Activated CD8-positive, alpha-beta T cell treated with anti-CD3 and anti-CD28 coated beads for 36 hours (primary cell): ENCODE measurements at regions of chr17 and their contacts with region 1.

Region 1: DNA sequence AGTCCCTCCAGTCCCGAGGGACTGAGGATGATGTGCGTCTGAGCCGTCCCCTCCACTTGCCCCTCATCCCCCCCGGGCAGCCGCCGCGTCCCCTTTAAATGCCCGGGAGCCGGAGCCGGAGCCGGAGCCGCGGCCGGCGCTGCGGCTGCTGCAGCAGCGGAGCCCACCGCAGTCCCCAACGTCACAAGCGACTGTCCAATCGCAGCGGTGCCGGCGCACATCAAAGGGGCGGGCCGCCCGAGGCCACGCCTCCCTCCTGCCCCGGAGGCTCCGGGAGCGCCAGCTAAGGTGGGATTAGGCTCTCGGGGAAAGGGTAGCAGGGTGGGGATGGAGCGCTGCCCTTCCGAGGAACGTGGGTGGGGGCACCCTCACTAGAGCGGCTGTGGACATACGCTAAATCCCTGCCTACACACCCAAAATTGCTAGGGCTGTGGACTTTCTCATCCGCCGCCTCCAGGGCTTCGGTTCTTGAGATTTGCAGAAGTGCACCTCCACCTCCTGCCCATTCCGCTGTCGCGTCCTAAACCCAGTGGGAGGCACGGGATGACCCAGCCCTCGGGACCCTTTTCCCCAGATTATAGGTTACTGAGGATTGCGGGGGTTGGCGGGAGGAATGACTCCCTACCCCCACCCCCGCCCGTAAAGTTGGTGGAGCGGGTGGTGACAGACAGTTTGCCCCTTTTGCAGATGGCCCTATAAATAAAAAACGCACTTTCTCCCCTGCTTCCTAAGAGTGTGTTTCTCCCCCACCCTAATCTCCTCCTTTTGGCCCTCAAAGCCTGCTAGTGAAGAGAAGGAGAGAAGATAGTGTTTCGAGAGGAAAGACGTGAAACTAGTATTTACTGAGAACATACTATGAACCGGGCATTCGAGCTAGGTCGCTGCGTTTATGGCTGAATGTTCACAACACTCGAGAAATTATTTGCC is at the start of gene PHOSPHO1:
- DNase-seq: peak; percentile 90
- ATAC-seq: peak; percentile 88
- H3K4me3 Mint-ChIP-seq: peak within 1 kb of the TSS; percentile 66
- H3K27ac Mint-ChIP-seq: no peak within 1 kb of the TSS
- H3K4me1 Mint-ChIP-seq: peaks cover 3% of the 10 kb centered on the region
- H3K27me3 Mint-ChIP-seq: peaks cover 19% of the 10 kb centered on the region
- CTCF ChIP-seq: no peak
- total RNA-seq, gene PHOSPHO1: not detected

Region 2: DNA sequence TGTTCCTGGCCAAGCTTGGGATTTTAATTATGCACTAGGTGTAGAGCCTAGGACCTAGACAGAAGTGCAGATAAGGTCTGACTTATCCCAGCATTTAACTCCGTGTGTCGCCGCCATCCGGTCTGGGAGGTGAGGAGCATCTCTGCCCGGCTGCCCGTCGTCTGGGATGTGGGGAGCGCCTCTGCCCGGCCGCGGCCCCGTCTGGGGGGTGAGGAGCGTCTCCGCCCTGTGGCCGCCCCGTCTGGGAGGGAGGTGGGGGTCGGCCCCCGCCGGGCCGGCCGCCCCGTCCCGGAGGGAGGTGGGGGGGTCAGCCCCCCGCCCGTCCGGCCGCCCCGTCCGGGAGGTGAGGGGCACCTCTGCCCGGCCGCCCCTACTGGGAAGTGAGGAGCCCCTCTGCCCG is 105.5 kb before region 1 on chr17:
- CTCF ChIA-PET with region 1: no interaction called
- POLR2A ChIA-PET with region 1: no interaction called
- intact Hi-C with region 1: no loop called
- DNase-seq: no peak
- ATAC-seq: no peak
- H3K4me3 Mint-ChIP-seq: no peak overlapping the region
- H3K27ac Mint-ChIP-seq: no peak overlapping the region
- H3K4me1 Mint-ChIP-seq: no peaks in the 10 kb centered on the region
- H3K27me3 Mint-ChIP-seq: peaks cover 21% of the 10 kb centered on the region
- CTCF ChIP-seq: no peak

Region 3: GRCh38 chr17:49180303-49180702 is 50.6 kb before region 1 on chr17:
- CTCF ChIA-PET with region 1: interaction called, 210 read pairs
- POLR2A ChIA-PET with region 1: interaction called, 20 read pairs
- intact Hi-C with region 1: loop called (anchors 2 kb)
- DNase-seq: peak; percentile 82
- ATAC-seq: peak; percentile 37
- H3K4me3 Mint-ChIP-seq: no peak overlapping the region
- H3K27ac Mint-ChIP-seq: no peak overlapping the region
- H3K4me1 Mint-ChIP-seq: peaks cover 4% of the 10 kb centered on the region
- H3K27me3 Mint-ChIP-seq: no peaks in the 10 kb centered on the region
- CTCF ChIP-seq: peak; percentile 99

Region 4: DNA sequence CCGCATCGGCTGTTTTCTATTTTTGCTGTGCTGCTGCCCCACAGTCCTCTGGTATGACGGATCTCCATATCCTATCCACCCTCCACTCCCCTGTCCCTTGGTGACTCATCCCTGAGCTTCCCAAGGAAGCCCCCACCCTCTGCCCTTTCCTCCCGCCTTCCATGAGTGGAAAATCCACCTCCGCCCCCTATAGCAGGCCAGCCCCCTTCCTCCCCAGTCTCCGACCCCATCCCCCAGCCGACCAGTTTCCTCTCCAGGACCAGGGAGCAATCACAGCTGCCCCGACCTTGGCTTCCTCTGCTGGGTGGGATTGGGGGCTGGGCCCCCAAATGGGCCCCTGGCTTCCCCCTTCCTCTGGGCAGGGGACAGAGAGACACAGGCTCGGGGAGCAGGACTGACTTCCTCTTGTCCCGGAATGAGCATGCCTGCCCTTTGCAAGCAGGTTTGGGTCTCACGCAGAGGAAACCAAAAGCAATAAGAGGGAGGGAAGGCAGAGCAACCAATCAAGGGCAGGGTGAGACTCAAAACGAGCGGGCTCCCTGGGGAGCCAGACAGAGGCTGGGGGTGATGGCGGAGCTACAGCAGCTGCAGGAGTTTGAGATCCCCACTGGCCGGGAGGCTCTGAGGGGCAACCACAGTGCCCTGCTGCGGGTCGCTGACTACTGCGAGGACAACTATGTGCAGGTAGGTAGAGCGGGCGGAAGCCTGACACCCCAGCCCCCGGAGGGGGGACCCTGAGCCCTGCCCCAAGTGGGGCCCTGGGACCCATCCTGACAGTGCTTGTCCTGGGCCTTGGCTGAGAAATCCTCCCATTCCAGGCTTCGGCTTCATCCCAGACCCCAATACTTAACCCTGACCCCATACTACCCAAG is 20.5 kb before region 1 on chr17 and contains the starts of genes ABI3 and GNGT2:
- CTCF ChIA-PET with region 1: interaction called, 15 read pairs
- POLR2A ChIA-PET with region 1: interaction called, 26 read pairs
- intact Hi-C with region 1: no loop called
- DNase-seq: peak; percentile 85
- ATAC-seq: peak; percentile 88
- H3K4me3 Mint-ChIP-seq: peak within 1 kb of the TSS; percentile 79
- H3K27ac Mint-ChIP-seq: peak within 1 kb of the TSS; percentile 95
- H3K4me1 Mint-ChIP-seq: peaks cover 56% of the 10 kb centered on the region
- H3K27me3 Mint-ChIP-seq: no peaks in the 10 kb centered on the region
- CTCF ChIP-seq: no peak
- total RNA-seq, gene ABI3: 39.3 to 45.1 TPM
- total RNA-seq, gene GNGT2: 21.7 to 23.9 TPM

Region 5: GRCh38 chr17:49217651-49218413 is 13.1 kb before region 1 on chr17:
- CTCF ChIA-PET with region 1: interaction called, 15 read pairs
- POLR2A ChIA-PET with region 1: interaction called, 20 read pairs
- intact Hi-C with region 1: no loop called
- DNase-seq: peak; percentile 83
- ATAC-seq: peak; percentile 61
- H3K4me3 Mint-ChIP-seq: peak overlapping the region; percentile 65
- H3K27ac Mint-ChIP-seq: peak overlapping the region; percentile 97
- H3K4me1 Mint-ChIP-seq: peaks cover 76% of the 10 kb centered on the region
- H3K27me3 Mint-ChIP-seq: no peaks in the 10 kb centered on the region
- CTCF ChIP-seq: no peak

Region 6: DNA sequence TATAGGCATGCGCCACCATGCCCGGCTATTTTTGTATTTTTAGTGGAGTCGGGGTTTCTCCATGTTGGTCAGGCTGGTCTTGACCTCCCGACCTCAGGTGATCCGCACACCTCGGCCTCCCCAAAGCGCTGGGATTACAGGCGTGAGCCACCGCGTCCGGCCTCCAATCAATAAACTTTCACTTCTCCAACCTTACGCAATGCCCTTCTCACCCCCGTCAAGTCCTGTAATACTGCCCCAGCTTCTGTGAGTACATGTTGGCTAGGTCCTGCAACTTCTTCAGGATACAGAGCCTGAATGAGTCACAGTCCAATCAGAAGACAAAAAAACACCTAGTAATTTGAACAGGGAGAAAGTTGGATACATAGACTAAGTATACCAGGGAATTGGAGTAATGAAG is 46.7 kb after region 1 on chr17:
- CTCF ChIA-PET with region 1: no interaction called
- POLR2A ChIA-PET with region 1: no interaction called
- intact Hi-C with region 1: no loop called
- DNase-seq: no peak
- ATAC-seq: no peak
- H3K4me3 Mint-ChIP-seq: no peak overlapping the region
- H3K27ac Mint-ChIP-seq: no peak overlapping the region
- H3K4me1 Mint-ChIP-seq: no peaks in the 10 kb centered on the region
- H3K27me3 Mint-ChIP-seq: no peaks in the 10 kb centered on the region
- CTCF ChIP-seq: no peak

Region 7: GRCh38 chr17:49290690-49291359 is 59.9 kb after region 1 on chr17:
- CTCF ChIA-PET with region 1: interaction called, 21 read pairs
- POLR2A ChIA-PET with region 1: no interaction called
- intact Hi-C with region 1: no loop called
- DNase-seq: peak; percentile 39
- ATAC-seq: peak; percentile 45
- H3K4me3 Mint-ChIP-seq: no peak overlapping the region
- H3K27ac Mint-ChIP-seq: no peak overlapping the region
- H3K4me1 Mint-ChIP-seq: peaks cover 6% of the 10 kb centered on the region
- H3K27me3 Mint-ChIP-seq: no peaks in the 10 kb centered on the region
- CTCF ChIP-seq: peak; percentile 83